ENCODE measurements at regions of chr4 and their contacts with region 1.

Region 1: DNA sequence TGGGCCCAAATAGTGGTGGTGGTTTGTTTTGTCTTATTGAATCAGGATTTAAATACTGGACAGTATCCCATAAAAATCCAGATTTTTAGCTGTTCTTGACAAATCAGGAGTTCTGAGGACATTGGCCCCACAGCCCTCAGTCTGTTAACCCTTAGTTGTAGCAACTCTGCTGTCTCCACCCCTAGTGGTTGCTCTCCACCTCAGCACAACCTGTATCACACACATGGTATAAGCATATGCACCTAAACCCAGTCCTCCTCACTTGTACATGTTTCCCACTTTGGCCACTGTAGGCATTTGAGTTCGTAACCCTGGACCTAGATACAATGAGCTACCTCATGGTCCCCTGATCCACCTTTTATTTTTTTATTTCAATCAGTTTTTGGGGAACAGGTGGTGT is 75.9 kb downstream of the MRPL1 start:
- DNase-seq: no peak

Region 2: DNA sequence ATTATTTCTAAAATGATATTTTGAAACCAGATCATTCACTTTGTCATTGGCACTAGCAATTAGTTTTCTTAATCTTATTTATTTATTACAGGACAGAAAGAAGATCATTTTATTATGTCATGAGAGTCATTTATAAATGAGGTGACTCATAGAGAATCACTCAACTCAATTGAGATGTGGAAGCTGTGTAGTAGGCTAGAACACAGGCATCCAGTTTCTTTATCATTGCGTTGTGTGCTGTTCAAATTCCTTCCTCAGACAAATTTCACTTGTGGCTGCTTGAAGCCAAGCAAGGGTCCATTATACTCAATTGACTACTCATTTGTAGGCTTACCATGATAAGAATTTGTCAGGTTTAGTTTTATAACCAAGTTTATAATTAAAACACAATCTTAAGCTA is 11.6 kb after region 1 on chr4:
- intact Hi-C with region 1: loop called in 1 of 2 experiments (anchors 1 kb)
- DNase-seq: no peak

Measured in posterior vena cava (tissue), 2 donors.